Tibial artery (tissue), 4 donors: ENCODE measurements at regions of chr2 and their contacts with region 1.

Region 1: DNA sequence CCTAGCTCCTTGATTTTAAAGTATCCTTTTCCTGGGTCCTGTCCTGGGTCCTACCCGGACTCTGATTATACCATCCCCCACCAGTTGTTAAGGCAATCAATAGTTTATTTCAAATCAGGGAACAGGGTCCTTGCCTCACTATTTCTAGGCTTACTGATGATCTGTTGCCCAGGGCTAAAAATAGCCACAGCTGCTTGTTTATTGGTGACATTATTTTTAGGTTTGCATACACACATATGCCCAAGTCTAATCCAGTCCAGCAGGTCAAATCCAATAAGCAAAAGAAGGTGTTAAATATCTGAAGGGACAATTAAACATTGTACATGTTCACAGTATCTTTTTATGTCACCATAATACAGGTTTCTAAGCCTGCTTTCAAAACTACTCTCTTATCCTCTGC is 66.0 kb downstream of the RAB10 start:
- DNase-seq: no peak
- H3K4me3 ChIP-seq: no peak overlapping the region
- H3K27ac ChIP-seq: no peak overlapping the region
- H3K4me1 ChIP-seq: peaks cover 0 to 14% (median 4%) of the 10 kb centered on the region in 4 donors
- H3K27me3 ChIP-seq: no peaks in the 10 kb centered on the region
- CTCF ChIP-seq: no peak

Region 2: DNA sequence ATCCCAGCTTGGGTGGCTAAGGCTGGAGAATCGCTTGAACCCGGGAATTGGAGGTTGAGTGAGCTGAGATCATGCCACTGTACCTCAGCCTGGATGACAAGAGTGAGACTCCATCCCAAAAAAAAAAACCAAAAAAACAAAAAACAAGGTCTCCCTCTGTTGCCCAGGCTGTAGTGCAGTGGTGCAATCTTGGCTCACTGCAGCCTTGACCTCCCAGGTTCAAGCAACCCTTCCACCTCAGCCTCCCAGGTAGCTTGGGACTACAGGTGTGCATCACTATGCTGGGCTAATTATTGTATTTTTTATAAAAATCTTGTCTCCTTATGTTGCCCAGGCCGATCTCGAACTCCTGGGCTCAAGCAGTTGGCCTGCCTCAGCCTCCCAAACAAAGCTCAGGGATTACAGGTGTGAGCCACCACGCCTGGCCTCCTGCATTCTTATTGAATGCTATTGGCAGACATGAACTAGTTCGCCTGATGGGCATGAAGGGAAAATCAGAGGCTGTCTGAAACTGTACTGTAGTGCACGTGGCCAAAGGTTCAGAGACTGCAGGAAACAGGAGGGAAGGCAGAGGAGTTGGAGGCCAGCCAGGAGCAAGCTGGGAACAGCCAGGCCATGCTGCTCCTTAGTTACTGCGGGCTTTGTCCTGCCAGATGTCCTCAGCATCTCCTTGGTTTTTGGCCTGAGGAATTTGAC is 205.7 kb before region 1 on chr2:
- intact Hi-C with region 1: no loop called
- DNase-seq: no peak
- H3K4me3 ChIP-seq: no peak overlapping the region
- H3K27ac ChIP-seq: no peak overlapping the region
- H3K4me1 ChIP-seq: no peaks in the 10 kb centered on the region
- H3K27me3 ChIP-seq: no peaks in the 10 kb centered on the region
- CTCF ChIP-seq: no peak

Region 3: GRCh38 chr2:26043862-26044696 is 55.9 kb before region 1 on chr2:
- intact Hi-C with region 1: loop called (anchors 5 kb)
- DNase-seq: peak in 1 of 2 donors; percentile 32
- H3K4me3 ChIP-seq: no peak overlapping the region
- H3K27ac ChIP-seq: no peak overlapping the region
- H3K4me1 ChIP-seq: peaks cover 0 to 62% (median 29%) of the 10 kb centered on the region in 4 donors
- H3K27me3 ChIP-seq: no peaks in the 10 kb centered on the region
- CTCF ChIP-seq: no peak